ENCODE measurements at regions of chr13 and their contacts with region 1.

Region 1: DNA sequence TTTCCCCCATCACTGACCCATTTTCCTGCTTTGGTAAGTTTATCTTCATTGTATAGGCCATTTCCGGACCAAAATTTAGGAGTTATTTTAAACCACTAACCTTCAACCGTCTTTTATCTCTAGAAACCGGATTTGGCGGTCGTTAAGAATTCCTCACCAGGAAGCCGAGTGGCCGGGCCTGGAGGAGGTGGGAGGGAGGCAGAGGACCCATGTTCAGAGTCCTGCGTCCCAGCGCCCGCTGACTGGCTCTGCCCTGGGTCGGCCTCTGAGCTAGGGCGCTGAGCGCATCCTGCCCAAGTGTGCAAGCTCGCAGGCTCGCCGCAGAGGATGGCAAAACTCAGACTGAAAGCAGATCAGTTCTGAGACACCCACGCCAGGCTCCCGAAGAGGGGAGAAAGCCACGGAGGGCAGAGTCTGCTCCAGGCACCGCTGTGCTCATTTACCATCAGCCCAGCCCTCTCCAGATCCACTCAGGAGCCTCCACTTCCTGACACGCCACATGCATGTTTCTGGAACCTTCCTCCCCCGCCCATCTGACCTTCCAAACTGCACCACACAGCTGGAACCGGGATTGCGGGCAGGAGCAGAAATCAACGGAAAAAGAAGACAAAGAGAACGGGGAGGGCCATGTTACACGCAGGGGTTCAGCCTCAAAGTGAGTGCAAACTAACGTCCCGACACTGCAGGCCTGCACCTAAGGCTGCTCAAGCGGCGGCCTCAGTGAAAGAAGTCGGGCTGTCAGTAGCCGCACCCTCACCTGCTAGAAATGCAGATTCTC is 8.3 kb downstream of the COL4A1 start:
- DNase-seq: no peak
- H3K4me3 ChIP-seq: no peak overlapping the region
- CTCF ChIP-seq: no peak

Region 2: GRCh38 chr13:110244071-110244830 is 54.4 kb before region 1 on chr13:
- in situ Hi-C with region 1: loop called (anchors 5 kb)
- DNase-seq: no peak
- H3K4me3 ChIP-seq: no peak overlapping the region
- CTCF ChIP-seq: no peak

Region 3: GRCh38 chr13:110338441-110339101 is 39.9 kb after region 1 on chr13:
- in situ Hi-C with region 1: loop called (anchors 5 kb)
- DNase-seq: peak; percentile 70
- H3K4me3 ChIP-seq: no peak overlapping the region
- CTCF ChIP-seq: no peak

Region 4: GRCh38 chr13:110396913-110397381 is 98.3 kb after region 1 on chr13:
- in situ Hi-C with region 1: loop called (anchors 5 kb)
- DNase-seq: peak; percentile 100
- H3K4me3 ChIP-seq: no peak overlapping the region
- CTCF ChIP-seq: no peak